ENCODE measurements at regions of chr5 and their contacts with region 1.

Region 1: GRCh38 chr5:154683101-154683880 is 71.9 kb upstream of the LARP1 start:
- DNase-seq: peak in 1 of 14 experiments; percentile 23
- ATAC-seq: peak; percentile 31
- H3K4me3 ChIP-seq: peak overlapping the region; percentile 67
- H3K4me3 Mint-ChIP-seq: peak overlapping the region; percentile 32
- H3K27ac ChIP-seq: no peak overlapping the region
- H3K27ac Mint-ChIP-seq: no peak overlapping the region
- H3K4me1 ChIP-seq: peaks cover 17% of the 10 kb centered on the region
- H3K4me1 Mint-ChIP-seq: peaks cover 8% of the 10 kb centered on the region
- H3K27me3 ChIP-seq: peaks cover 0 to 5% of the 10 kb centered on the region in 2 experiments
- H3K27me3 Mint-ChIP-seq: no peaks in the 10 kb centered on the region
- CTCF ChIP-seq: no peak

Region 2: GRCh38 chr5:154146409-154146808 is 536.9 kb before region 1 on chr5:
- CTCF ChIA-PET with region 1: no interaction called
- POLR2A ChIA-PET with region 1: no interaction called
- intact Hi-C with region 1: no loop called
- DNase-seq: no peak
- ATAC-seq: no peak
- H3K4me3 ChIP-seq: no peak overlapping the region
- H3K4me3 Mint-ChIP-seq: no peak overlapping the region
- H3K27ac ChIP-seq: no peak overlapping the region
- H3K27ac Mint-ChIP-seq: no peak overlapping the region
- H3K4me1 ChIP-seq: no peaks in the 10 kb centered on the region
- H3K4me1 Mint-ChIP-seq: no peaks in the 10 kb centered on the region
- H3K27me3 ChIP-seq: peaks cover 0 to 2% of the 10 kb centered on the region in 2 experiments
- H3K27me3 Mint-ChIP-seq: peaks cover 9% of the 10 kb centered on the region
- CTCF ChIP-seq: no peak

Region 3: GRCh38 chr5:154761046-154761736 is 77.9 kb after region 1 on chr5:
- CTCF ChIA-PET with region 1: no interaction called
- POLR2A ChIA-PET with region 1: no interaction called
- intact Hi-C with region 1: loop called in 1 of 2 experiments (anchors 2 kb)
- DNase-seq: peak in 4 of 14 experiments; percentile 39 to 62 (median 58)
- ATAC-seq: peak; percentile 21
- H3K4me3 ChIP-seq: no peak overlapping the region
- H3K4me3 Mint-ChIP-seq: peak overlapping the region; percentile 64
- H3K27ac ChIP-seq: peak overlapping the region; percentile 38 to 51
- H3K27ac Mint-ChIP-seq: peak overlapping the region; percentile 91
- H3K4me1 ChIP-seq: peaks cover 72% of the 10 kb centered on the region
- H3K4me1 Mint-ChIP-seq: peaks cover 76% of the 10 kb centered on the region
- H3K27me3 ChIP-seq: no peaks in the 10 kb centered on the region
- H3K27me3 Mint-ChIP-seq: no peaks in the 10 kb centered on the region
- CTCF ChIP-seq: no peak